ENCODE measurements at regions of chr1 and their contacts with region 1.

Region 1: DNA sequence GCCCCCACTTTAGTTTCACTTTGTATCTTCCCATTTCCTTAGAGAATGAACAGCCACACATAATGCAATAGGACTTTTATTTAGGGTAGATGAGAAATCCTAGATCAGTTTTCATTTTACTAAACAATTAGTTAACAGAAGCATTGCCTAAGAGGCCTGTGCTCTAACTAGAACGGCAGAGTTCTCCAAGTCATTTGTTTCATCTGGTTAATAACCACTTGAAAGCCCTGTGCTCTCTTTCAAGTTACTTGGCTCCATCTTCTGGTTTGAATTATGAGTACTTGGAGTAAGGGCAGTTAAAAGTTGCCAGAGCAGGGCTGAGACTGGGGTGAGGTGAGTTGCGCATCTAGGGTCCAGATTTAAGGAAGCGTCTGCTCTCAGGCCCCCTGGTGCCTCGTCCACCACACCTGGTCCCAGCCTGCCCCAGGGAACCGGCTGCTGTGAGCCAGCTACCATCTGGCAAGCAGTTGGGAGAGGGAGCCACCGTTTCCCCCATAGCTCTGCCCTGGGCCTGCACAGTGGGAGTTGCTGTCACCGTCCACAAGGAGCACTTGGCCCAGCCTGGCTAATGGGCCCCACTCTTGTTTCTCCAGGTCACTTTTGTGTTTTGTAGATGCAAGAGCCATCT is 18.1 kb upstream of the SLC44A3 start:
- DNase-seq: peak in 3 of 5 donors; percentile 29 to 47 (median 40)
- ATAC-seq: peak; percentile 76 to 87 (median 82)
- H3K4me3 ChIP-seq: peak overlapping the region in 8 of 12 donors; percentile 2 to 40 (median 24)
- H3K27ac ChIP-seq: peak overlapping the region; percentile 28 to 80 (median 64)
- H3K4me1 ChIP-seq: peaks cover 0 to 62% (median 32%) of the 10 kb centered on the region in 12 donors
- H3K27me3 ChIP-seq: no peaks in the 10 kb centered on the region
- CTCF ChIP-seq: peak; percentile 12 to 73 (median 53)
- POLR2A ChIP-seq: no peak

Region 2: GRCh38 chr1:94514095-94514727 is 287.8 kb before region 1 on chr1:
- intact Hi-C with region 1: loop called in 1 of 10 experiments (anchors 2 kb)
- DNase-seq: no peak
- ATAC-seq: peak in 3 of 4 donors; percentile 31 to 63 (median 34)
- H3K4me3 ChIP-seq: no peak overlapping the region
- H3K27ac ChIP-seq: no peak overlapping the region
- H3K4me1 ChIP-seq: peaks cover 0 to 4% (median 0%) of the 10 kb centered on the region in 12 donors
- H3K27me3 ChIP-seq: no peaks in the 10 kb centered on the region
- CTCF ChIP-seq: peak; percentile 39 to 67 (median 60)
- POLR2A ChIP-seq: no peak

Region 3: GRCh38 chr1:94527447-94528031 is 274.5 kb before region 1 on chr1:
- intact Hi-C with region 1: loop called in 7 of 10 experiments (anchors 2 to 5 kb)
- DNase-seq: no peak
- ATAC-seq: peak in 3 of 4 donors; percentile 20 to 59 (median 50)
- H3K4me3 ChIP-seq: no peak overlapping the region
- H3K27ac ChIP-seq: peak overlapping the region in 2 of 12 donors; percentile 25 to 44
- H3K4me1 ChIP-seq: peaks cover 0 to 26% (median under 1%) of the 10 kb centered on the region in 12 donors
- H3K27me3 ChIP-seq: no peaks in the 10 kb centered on the region
- CTCF ChIP-seq: no peak
- POLR2A ChIP-seq: no peak

Region 4: DNA sequence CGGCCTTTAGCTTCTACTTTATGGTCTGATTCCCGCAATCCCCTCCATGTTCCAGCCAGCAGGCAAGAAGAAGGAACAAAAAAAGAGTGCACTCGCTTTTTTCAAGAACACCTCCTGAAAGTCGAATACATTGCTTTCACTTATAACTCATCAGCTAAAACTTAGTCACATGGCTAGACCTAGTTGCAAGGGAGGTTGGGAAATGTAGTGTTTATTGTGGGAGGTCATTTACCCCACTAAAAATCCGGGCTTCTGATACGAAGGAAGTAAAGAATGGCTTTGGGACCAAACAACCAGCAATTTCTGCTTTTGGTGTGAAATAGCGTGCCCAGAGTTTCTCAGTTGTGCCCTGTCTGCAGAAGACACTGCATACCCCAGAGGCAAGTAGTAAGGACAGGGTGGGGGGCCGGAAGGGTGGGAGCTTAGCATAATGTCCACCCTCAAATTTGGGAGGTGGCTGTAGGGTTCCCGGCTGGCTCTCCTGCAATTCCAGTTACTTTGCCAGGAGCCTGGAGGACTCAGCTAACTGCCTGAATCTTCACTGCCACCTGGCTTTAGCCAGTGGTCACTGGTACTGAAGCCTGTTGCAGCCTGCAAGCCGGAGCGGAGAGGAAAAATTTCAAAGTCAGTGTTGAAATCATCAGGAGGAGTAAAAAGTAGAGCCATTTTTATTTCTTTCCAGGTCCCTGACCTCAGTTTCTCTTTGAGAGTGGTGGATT is 202.8 kb before region 1 on chr1:
- intact Hi-C with region 1: loop called in 5 of 10 experiments (anchors 5 to 10 kb)
- DNase-seq: peak in 3 of 5 donors; percentile 33 to 58 (median 52)
- ATAC-seq: peak; percentile 56 to 90 (median 90)
- H3K4me3 ChIP-seq: no peak overlapping the region
- H3K27ac ChIP-seq: no peak overlapping the region
- H3K4me1 ChIP-seq: peaks cover 0 to 24% (median 0%) of the 10 kb centered on the region in 12 donors
- H3K27me3 ChIP-seq: peaks cover 0 to 26% (median 0%) of the 10 kb centered on the region in 9 donors
- CTCF ChIP-seq: peak in 11 of 12 donors; percentile 41 to 66 (median 52)
- POLR2A ChIP-seq: no peak

Region 5: DNA sequence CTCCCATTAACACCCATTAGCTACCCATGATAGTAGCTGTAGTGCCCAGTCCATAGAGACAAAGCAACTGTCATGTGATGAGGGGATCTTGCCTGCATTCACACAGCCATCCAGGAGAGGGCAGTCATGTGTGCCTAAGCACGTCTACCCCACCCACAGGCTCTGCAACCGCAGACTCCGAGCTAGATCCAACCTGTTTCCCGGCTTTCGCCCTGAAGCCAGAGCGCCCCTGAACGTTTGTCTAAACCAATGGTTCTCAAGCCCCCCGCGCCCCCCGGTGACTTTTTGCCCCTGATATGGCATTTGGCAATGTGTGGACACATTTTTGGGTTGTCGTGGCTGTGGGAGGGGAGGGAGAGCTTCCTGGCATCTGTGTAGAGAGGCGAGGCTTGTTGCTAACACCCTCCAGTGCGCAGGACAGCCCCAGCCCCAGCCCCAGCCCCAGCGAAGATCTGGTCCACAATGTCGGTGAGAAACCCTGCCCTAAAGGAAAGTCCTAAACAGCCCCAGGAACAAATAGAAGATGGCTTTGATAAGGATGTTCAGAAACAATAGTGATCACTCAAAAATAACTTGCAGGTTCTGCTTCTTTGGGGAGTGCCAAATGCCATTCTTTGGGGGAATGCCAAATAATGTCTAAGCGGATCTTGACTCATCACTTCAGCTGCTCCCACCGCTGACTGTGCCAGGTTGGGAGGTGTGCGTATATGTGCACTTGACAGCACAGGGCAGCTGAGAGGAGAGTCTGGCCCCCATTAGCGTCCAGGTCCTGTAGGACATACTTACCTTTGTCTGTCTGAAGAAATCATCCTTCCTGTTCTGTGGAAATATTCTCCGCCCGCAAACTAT is 52.6 kb after region 1 on chr1:
- intact Hi-C with region 1: no loop called
- DNase-seq: peak; percentile 84 to 90 (median 87)
- ATAC-seq: peak; percentile 89 to 95 (median 94)
- H3K4me3 ChIP-seq: peak overlapping the region in 11 of 12 donors; percentile 10 to 59 (median 50)
- H3K27ac ChIP-seq: peak overlapping the region in 10 of 12 donors; percentile 12 to 79 (median 70)
- H3K4me1 ChIP-seq: peaks cover 0 to 43% (median 17%) of the 10 kb centered on the region in 12 donors
- H3K27me3 ChIP-seq: no peaks in the 10 kb centered on the region
- CTCF ChIP-seq: peak; percentile 79 to 97 (median 90)
- POLR2A ChIP-seq: peak in 1 of 2 donors; percentile 27

Region 6: DNA sequence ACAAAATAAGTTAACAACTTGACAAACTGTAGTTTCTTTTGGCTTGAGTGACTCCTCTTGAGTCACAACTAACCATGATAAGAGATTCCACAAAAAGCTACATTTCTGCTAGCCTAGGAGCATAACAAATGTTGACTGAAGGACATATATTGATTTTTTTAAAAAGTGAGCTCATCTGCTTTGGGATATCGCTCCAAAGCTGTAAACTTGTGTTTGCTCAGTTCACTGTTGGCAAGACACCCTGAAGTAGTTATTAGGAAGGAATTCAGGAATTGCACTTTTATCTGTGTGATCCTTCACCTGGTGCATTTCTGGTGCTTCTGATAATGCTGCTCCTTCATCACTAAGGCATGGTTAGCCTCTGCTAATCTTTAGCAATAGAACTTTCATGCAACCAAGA is 455.7 kb after region 1 on chr1:
- intact Hi-C with region 1: no loop called
- DNase-seq: no peak
- ATAC-seq: no peak
- H3K4me3 ChIP-seq: no peak overlapping the region
- H3K27ac ChIP-seq: no peak overlapping the region
- H3K4me1 ChIP-seq: no peaks in the 10 kb centered on the region
- H3K27me3 ChIP-seq: no peaks in the 10 kb centered on the region
- CTCF ChIP-seq: no peak
- POLR2A ChIP-seq: no peak

Measured in heart left ventricle (tissue), 16 donors.